IMR-90 (cell line): ENCODE measurements at regions of chr11 and their contacts with region 1.

Region 1: GRCh38 chr11:72642884-72643511 is 31.2 kb downstream of the PDE2A start:
- DNase-seq: peak; percentile 11
- ATAC-seq: peak; percentile 87
- H3K4me3 ChIP-seq: no peak overlapping the region; the same call in 1 of the 2 replicates
- H3K27ac ChIP-seq: no peak overlapping the region
- H3K4me1 ChIP-seq: peaks cover 2% of the 10 kb centered on the region; the same call in 1 of the 2 replicates
- H3K27me3 ChIP-seq: peaks cover 55% of the 10 kb centered on the region
- CTCF ChIP-seq: peak; percentile 84
- POLR2A ChIP-seq: no peak
- RAD21 ChIP-seq: peak; percentile 72

Region 2: GRCh38 chr11:72483412-72484186 is 159.4 kb before region 1 on chr11:
- CTCF ChIA-PET with region 1: no interaction called
- POLR2A ChIA-PET with region 1: no interaction called
- dilution Hi-C with region 1: no loop called
- in situ Hi-C with region 1: loop called (anchors 10 kb)
- intact Hi-C with region 1: loop called (anchors 1 kb)
- DNase-seq: peak; percentile 50
- ATAC-seq: no peak
- H3K4me3 ChIP-seq: no peak overlapping the region
- H3K27ac ChIP-seq: no peak overlapping the region
- H3K4me1 ChIP-seq: peaks cover 2% of the 10 kb centered on the region; the same call in 1 of the 2 replicates
- H3K27me3 ChIP-seq: peaks cover 30% of the 10 kb centered on the region
- CTCF ChIP-seq: no peak
- POLR2A ChIP-seq: no peak
- RAD21 ChIP-seq: no peak

Region 3: DNA sequence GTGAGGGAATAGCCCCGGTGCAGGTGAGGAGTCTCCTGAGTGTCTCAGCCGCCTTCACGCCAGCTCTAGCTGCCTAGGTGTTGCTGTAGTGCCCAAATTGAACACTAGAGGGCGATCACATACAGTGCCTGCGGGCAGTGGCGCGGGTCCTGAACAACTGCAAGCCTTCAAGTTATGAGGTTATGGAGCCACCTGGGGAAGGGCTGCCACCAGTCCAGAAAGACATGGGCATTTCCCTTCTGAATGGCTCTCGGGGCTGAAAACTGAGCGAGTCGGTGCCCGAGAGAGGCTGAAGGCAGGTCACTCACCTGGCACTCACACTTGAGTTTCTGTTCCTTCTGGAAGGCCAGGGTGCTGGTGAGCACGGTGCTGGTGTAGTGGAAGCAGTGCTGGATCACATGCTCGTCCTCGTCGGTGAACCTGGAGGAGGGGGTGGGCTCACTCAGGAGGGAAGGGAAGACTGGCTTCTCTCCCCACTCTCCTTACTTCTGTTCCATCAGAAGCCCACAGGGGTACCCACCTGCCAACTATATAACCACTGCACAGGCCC is 57.2 kb before region 1 on chr11:
- CTCF ChIA-PET with region 1: no interaction called
- POLR2A ChIA-PET with region 1: no interaction called
- dilution Hi-C with region 1: no loop called
- in situ Hi-C with region 1: loop called (anchors 10 kb)
- intact Hi-C with region 1: loop called (anchors 1 kb)
- DNase-seq: peak; percentile 44
- ATAC-seq: peak; percentile 85
- H3K4me3 ChIP-seq: no peak overlapping the region
- H3K27ac ChIP-seq: no peak overlapping the region
- H3K4me1 ChIP-seq: no peaks in the 10 kb centered on the region; the same call in 1 of the 2 replicates
- H3K27me3 ChIP-seq: peaks cover 98% of the 10 kb centered on the region
- CTCF ChIP-seq: peak; percentile 78
- POLR2A ChIP-seq: no peak
- RAD21 ChIP-seq: peak; percentile 75

Region 4: GRCh38 chr11:72598906-72599305 is 44.1 kb before region 1 on chr11:
- CTCF ChIA-PET with region 1: interaction called, 5 read pairs
- POLR2A ChIA-PET with region 1: no interaction called
- dilution Hi-C with region 1: no loop called
- in situ Hi-C with region 1: no loop called
- intact Hi-C with region 1: loop called (anchors 1 kb)
- DNase-seq: peak; percentile 21
- ATAC-seq: peak; percentile 93
- H3K4me3 ChIP-seq: no peak overlapping the region
- H3K27ac ChIP-seq: no peak overlapping the region
- H3K4me1 ChIP-seq: no peaks in the 10 kb centered on the region
- H3K27me3 ChIP-seq: peaks cover 84% of the 10 kb centered on the region
- CTCF ChIP-seq: peak; percentile 50
- POLR2A ChIP-seq: no peak
- RAD21 ChIP-seq: peak; percentile 42

Region 5: GRCh38 chr11:72856551-72857345 is 213.8 kb after region 1 on chr11:
- CTCF ChIA-PET with region 1: no interaction called
- POLR2A ChIA-PET with region 1: no interaction called
- dilution Hi-C with region 1: no loop called
- in situ Hi-C with region 1: no loop called
- intact Hi-C with region 1: no loop called
- DNase-seq: no peak
- ATAC-seq: peak; percentile 42; the same call in 1 of the 2 replicates
- H3K4me3 ChIP-seq: no peak overlapping the region
- H3K27ac ChIP-seq: no peak overlapping the region
- H3K4me1 ChIP-seq: peaks cover 2% of the 10 kb centered on the region; the same call in 1 of the 2 replicates
- H3K27me3 ChIP-seq: no peaks in the 10 kb centered on the region
- CTCF ChIP-seq: no peak
- POLR2A ChIP-seq: no peak
- RAD21 ChIP-seq: no peak